Activated B cell treated with CpG ODN at 0.5 μM for 24 hours (primary cell): ENCODE measurements at regions of chr2 and their contacts with region 1.

Region 1: GRCh38 chr2:196205881-196206435 is 34.6 kb upstream of the STK17B start:
- DNase-seq: no peak
- ATAC-seq: no peak
- H3K4me3 Mint-ChIP-seq: no peak overlapping the region
- H3K27ac Mint-ChIP-seq: peak overlapping the region; percentile 51
- H3K4me1 Mint-ChIP-seq: peaks cover 47% of the 10 kb centered on the region
- H3K27me3 Mint-ChIP-seq: no peaks in the 10 kb centered on the region
- CTCF ChIP-seq: no peak

Region 2: DNA sequence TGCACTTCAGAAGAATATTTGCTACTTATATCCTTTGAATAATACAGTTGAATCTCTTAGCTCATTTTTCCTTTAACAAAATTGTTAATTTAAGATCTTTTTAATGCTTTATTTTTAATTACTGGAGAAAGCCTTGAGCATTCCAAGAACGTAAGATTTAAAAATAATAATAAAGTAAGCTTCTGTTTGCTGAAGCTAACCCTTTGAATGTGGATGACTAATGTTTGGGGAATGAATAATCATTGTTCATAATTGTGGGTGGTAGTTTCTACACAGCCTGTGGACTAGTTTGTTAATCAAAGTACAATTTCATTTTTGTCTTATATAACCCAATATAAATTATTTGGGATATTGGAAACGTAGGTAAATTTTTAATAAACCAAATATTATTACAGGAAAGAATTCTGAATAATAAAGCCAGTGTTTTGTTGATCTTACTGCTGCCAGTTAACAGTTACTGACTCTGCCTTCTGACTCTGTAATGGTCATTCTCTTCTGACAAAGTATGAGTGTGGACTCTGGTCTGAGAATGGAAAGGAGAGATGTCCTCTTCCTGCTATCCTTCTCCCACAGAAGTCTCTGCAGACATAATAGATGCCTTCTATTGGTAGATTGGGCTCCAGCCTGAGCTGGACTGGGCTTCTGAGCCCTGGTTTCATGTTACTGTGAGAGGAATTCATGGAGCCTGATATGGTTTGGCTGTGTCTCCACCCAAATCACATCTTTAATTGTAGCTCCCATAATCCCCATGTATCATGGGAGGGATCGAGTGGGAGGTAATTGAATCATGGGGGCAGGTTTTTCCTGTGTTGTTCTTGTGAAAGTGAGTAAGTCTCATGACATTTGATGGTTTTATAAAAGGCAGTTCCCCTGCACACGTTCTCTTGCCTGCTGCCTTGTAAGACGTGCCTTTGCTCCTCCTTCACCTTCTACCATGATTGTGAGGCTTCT is 841.7 kb before region 1 on chr2:
- CTCF ChIA-PET with region 1: no interaction called
- POLR2A ChIA-PET with region 1: no interaction called
- intact Hi-C with region 1: no loop called
- DNase-seq: no peak
- ATAC-seq: no peak
- H3K4me3 Mint-ChIP-seq: no peak overlapping the region
- H3K27ac Mint-ChIP-seq: no peak overlapping the region
- H3K4me1 Mint-ChIP-seq: no peaks in the 10 kb centered on the region
- H3K27me3 Mint-ChIP-seq: peaks cover 1% of the 10 kb centered on the region
- CTCF ChIP-seq: no peak

Region 3: DNA sequence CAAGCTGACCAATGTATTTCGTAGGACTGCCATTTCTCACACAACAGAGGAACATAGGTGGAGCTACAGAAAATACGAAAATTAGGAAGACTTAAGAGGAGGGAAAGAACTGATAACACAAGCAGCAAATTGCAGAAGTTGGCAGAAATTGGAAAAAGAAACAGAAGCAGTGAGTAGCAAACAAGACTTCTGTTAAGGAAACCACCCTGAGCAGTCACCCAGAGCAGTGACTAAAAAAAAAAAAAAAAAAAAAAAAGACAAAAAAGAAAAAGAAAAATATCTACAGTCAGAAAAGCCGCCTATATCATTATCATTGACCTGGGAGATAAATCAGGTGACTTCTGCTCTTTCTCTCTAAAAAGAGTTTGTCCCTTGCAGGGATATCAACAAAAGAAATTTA is 56.0 kb before region 1 on chr2:
- CTCF ChIA-PET with region 1: no interaction called
- POLR2A ChIA-PET with region 1: interaction called, 3 read pairs
- intact Hi-C with region 1: loop called (anchors 1 kb)
- DNase-seq: no peak
- ATAC-seq: peak; percentile 71
- H3K4me3 Mint-ChIP-seq: peak overlapping the region; percentile 70
- H3K27ac Mint-ChIP-seq: peak overlapping the region; percentile 93
- H3K4me1 Mint-ChIP-seq: peaks cover 78% of the 10 kb centered on the region
- H3K27me3 Mint-ChIP-seq: no peaks in the 10 kb centered on the region
- CTCF ChIP-seq: no peak

Region 4: GRCh38 chr2:196182439-196183171 is 23.4 kb before region 1 on chr2:
- CTCF ChIA-PET with region 1: interaction called, 8 read pairs
- POLR2A ChIA-PET with region 1: interaction called, 63 read pairs
- intact Hi-C with region 1: loop called (anchors 1 kb)
- DNase-seq: no peak
- ATAC-seq: peak; percentile 83
- H3K4me3 Mint-ChIP-seq: peak overlapping the region; percentile 67
- H3K27ac Mint-ChIP-seq: peak overlapping the region; percentile 95
- H3K4me1 Mint-ChIP-seq: peaks cover 77% of the 10 kb centered on the region
- H3K27me3 Mint-ChIP-seq: no peaks in the 10 kb centered on the region
- CTCF ChIP-seq: no peak

Region 5: DNA sequence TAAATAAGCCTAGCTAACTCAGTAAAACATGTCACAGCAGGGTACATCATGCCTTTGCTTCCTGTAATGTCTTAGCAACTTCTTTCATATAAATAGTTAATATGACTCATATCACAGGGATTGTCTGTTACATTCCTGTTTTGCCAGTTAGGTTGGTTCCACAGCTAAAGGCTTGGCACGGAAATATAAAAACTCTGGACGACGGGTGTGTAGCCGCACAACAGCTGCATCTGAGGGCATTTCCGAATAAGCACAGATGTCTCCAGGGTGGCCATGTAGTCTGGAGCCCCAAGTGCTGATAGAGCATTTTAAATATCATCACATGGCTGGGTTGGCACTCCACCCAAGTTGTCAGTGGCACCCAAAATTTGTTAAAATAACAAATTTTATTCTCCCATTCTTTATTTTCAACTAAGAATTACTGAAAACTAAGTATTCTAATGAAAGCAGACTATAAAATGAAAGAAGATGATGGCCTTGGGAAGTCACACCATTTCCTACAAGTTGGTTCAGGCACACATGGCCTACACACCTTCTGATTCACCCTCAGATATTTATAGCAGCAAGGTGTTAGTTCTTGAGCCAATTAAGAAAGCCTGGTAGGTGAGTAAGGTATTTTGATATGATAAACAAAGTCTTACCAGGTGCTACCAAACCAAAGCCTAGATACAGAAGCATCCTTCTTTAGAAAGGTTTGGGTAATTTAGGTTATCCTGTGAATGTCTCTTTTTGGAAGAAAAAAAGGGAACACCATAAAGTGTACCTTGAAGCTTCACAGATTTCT is 27.3 kb after region 1 on chr2:
- CTCF ChIA-PET with region 1: interaction called, 3 read pairs
- POLR2A ChIA-PET with region 1: interaction called, 30 read pairs
- intact Hi-C with region 1: loop called (anchors 1 kb)
- DNase-seq: no peak
- ATAC-seq: peak; percentile 15
- H3K4me3 Mint-ChIP-seq: peak overlapping the region; percentile 24
- H3K27ac Mint-ChIP-seq: peak overlapping the region; percentile 91
- H3K4me1 Mint-ChIP-seq: peaks cover 81% of the 10 kb centered on the region
- H3K27me3 Mint-ChIP-seq: no peaks in the 10 kb centered on the region
- CTCF ChIP-seq: no peak

Region 6: GRCh38 chr2:196939187-196939770 is 733.3 kb after region 1 on chr2:
- CTCF ChIA-PET with region 1: no interaction called
- POLR2A ChIA-PET with region 1: no interaction called
- intact Hi-C with region 1: no loop called
- DNase-seq: no peak
- ATAC-seq: no peak
- H3K4me3 Mint-ChIP-seq: no peak overlapping the region
- H3K27ac Mint-ChIP-seq: no peak overlapping the region
- H3K4me1 Mint-ChIP-seq: no peaks in the 10 kb centered on the region
- H3K27me3 Mint-ChIP-seq: peaks cover 2% of the 10 kb centered on the region
- CTCF ChIP-seq: no peak